Dorsolateral prefrontal cortex (tissue), 120 donors: ENCODE measurements at regions of chr14 and their contacts with region 1.

Region 1: GRCh38 chr14:55270832-55271565 is at the start of gene FBXO34:
- DNase-seq: peak; percentile 97 to 99 (median 98)
- H3K4me3 ChIP-seq: peak within 1 kb of the TSS; percentile 67 to 99 (median 93)
- H3K27ac ChIP-seq: peak within 1 kb of the TSS; percentile 12 to 96 (median 84)
- H3K27me3 ChIP-seq: no peaks in the 10 kb centered on the region
- CTCF ChIP-seq: peak; percentile 91 to 100 (median 99)
- total RNA-seq, gene FBXO34: 21.6 to 85.6 (median 58.1) TPM

Region 2: GRCh38 chr14:55340482-55340881 is 69.5 kb after region 1 on chr14:
- intact Hi-C with region 1: no loop called
- DNase-seq: no peak
- H3K4me3 ChIP-seq: no peak overlapping the region
- H3K27ac ChIP-seq: no peak overlapping the region
- H3K27me3 ChIP-seq: no peaks in the 10 kb centered on the region
- CTCF ChIP-seq: no peak

Region 3: GRCh38 chr14:55354500-55354899 is 83.5 kb after region 1 on chr14:
- intact Hi-C with region 1: loop called (anchors 2 kb)
- DNase-seq: peak in 8 of 10 donors; percentile 46 to 78 (median 58)
- H3K4me3 ChIP-seq: no peak overlapping the region
- H3K27ac ChIP-seq: peak overlapping the region in 17 of 59 donors; percentile 8 to 59 (median 30)
- H3K27me3 ChIP-seq: no peaks in the 10 kb centered on the region
- CTCF ChIP-seq: peak; percentile 30 to 79 (median 65)

Region 4: DNA sequence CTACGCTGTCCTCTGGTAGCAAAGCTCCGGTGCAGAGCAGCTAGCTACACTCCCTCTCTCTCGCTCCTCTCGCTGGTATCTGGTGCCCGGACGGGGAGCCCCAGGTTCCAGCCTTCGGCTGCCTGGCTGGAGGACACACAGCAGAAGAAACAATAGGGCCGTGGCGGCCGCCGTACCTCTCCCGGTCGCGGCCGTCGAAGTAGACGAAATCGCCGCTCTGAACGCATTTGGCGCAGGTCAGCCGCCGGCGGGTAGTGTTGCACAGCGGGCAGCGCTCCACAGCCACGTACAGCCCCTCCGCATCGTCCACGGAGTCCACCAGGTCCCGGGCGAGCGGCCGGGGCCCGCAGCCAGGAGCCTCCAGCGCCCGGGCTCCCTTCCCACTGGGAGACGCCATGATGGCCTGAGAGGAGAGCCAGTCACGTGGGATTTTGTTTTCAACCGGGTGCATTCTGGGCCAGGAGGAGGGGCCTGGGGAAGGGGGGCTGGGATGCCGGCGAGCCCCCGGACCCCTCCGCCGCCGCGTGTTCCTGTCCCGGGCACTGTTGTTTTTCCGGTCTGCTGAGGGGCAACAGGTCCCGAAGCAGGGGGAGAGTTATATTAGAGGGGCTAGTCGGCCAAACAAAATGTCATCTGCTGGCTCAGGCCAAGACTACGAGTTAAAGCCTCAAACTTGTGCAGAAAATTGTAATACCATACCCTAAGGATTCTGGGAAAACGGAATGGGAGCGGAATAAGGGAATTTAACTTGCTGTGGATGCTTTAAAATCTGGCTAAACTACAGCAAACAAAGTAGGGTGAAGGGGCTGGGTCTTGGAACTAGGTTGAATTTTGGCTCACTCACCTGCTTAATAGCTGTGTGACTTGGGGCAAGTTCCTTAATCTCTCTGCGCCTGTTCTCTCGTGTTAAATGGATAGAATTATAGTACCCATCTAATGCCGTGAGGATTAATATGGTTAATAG is 140.7 kb after region 1 on chr14 and contains the start of gene ATG14:
- intact Hi-C with region 1: loop called (anchors 5 kb)
- DNase-seq: peak; percentile 81 to 92 (median 88)
- H3K4me3 ChIP-seq: peak within 1 kb of the TSS; percentile 71 to 100 (median 96)
- H3K27ac ChIP-seq: peak within 1 kb of the TSS; percentile 58 to 98 (median 91)
- H3K27me3 ChIP-seq: no peaks in the 10 kb centered on the region
- CTCF ChIP-seq: peak in 30 of 56 donors; percentile 4 to 57 (median 31)
- total RNA-seq, gene ATG14: 8.6 to 22.0 (median 14.1) TPM

Region 5: DNA sequence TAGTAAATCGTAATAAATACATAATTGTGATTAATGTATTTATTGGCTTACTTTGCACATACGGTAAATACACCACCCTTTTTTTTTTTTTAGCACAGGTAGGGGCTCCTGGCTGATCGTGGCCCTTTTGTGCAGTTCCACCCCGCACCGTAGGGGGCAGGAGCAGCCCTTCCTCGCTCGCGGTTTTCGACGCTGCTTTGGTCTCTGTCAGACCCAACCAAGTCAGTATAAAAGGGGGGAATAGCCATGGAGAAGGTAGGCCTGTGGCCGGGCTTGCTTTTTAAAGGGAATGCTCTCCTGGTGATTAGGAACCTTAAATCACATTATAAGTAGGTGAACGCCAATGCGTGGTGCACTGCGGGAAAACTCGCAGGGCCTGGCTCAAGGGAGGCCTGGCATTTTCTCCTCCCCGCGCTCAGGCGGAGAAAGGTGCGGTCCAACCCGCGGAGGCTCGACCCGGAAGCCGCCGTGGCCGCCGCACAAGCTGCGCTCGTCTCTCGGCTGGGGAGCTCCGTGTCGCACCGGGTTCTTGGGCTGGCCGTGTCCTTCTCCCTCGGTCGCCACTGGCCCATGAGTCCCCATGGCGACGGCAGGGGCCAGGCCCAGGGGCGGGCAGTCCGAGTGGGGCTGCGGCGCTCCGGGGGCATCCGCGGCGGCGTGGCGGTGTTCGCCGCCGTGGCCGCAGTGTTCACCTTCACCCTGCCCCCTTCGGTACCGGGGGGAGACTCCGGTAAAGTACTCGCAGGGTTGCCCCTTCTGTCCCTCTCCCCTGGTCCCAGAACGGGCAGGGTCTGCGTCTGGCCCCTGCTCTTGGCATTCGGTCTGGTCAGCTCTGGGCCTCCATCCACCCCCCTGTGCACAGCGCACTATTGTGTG is 1308.6 kb after region 1 on chr14 and contains the start of gene TMEM260:
- intact Hi-C with region 1: loop called in 1 of 2 experiments (anchors 5 kb)
- DNase-seq: peak; percentile 71 to 89 (median 79)
- H3K4me3 ChIP-seq: peak within 1 kb of the TSS; percentile 37 to 100 (median 94)
- H3K27ac ChIP-seq: peak within 1 kb of the TSS; percentile 11 to 98 (median 91)
- H3K27me3 ChIP-seq: no peaks in the 10 kb centered on the region
- CTCF ChIP-seq: peak; percentile 85 to 99 (median 95)
- total RNA-seq, gene TMEM260: 20.8 to 56.5 (median 39.2) TPM